ENCODE measurements at regions of chr1 and their contacts with region 1.

Region 1: DNA sequence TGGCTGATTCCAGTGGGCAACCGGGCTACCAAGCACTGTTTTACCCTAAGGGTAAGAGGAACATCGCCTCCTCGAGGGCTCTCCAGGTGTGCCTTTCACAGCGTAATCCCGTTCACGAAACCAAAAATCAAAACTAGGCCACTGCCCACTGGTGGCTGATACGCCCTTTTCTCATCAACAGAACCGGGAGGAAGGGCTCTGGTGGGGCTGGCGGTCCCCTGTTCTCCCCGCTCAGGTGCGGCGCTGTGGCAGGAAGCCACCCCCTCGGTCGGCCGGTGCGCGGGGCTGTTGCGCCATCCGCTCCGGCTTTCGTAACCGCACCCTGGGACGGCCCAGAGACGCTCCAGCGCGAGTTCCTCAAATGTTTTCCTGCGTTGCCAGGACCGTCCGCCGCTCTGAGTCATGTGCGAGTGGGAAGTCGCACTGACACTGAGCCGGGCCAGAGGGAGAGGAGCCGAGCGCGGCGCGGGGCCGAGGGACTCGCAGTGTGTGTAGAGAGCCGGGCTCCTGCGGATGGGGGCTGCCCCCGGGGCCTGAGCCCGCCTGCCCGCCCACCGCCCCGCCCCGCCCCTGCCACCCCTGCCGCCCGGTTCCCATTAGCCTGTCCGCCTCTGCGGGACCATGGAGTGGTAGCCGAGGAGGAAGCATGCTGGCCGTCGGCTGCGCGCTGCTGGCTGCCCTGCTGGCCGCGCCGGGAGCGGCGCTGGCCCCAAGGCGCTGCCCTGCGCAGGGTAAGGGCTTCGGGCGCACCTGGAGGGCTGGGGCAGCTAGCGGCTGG is at the start of gene IL6R:
- DNase-seq: peak; percentile 96
- ATAC-seq: peak; percentile 89
- total RNA-seq, gene IL6R: 10.3 TPM

Region 2: DNA sequence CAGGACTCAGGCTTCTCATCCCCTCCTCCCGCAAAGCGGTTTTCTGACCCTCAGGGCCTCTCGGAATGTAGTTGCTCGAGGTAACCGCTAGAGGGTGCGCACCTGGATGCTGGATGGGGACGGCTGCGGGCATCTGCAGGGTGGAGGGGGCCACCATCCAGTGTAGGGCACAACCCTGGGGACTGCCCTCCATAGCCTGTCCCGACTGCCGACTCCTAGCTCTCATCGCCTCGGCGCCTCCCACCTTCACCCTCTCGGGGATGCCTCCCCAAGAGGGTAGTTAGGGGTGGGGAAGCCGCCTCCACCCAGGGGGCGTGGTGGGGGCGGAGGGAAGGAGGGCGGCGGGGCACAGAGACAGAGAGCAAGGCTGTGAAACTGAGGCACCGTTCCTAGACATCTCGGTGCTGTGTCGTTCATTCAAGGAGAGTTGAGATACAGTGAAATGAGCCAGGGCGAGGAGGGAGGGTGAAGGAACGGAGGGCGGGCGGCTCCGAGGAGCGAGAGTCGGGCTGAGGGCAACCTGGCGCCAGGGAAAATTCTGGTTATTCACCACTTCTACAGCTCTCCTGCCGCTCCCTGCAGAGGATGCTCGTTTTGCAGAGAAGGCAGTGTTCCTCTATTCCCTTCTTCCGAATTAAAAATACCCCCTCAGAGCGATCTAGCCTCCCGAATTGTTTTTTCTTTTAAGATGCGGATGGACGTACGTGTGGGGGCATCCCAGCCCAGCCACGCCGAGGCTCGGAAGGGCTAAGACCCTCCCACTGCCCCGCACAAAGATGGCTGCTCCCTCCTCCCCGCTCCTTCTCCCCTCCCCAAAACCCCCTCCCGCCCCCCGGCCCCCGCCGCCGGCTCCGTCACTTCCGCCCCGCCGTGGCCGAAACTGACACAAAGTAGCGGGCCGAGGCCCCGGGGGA is 80.2 kb before region 1 on chr1 and contains the start of gene ATP8B2:
- intact Hi-C with region 1: loop called (anchors 5 kb)
- DNase-seq: peak; percentile 76
- ATAC-seq: peak; percentile 68
- total RNA-seq, gene ATP8B2: 11.0 TPM

Region 3: GRCh38 chr1:154434346-154435085 is 29.3 kb after region 1 on chr1:
- intact Hi-C with region 1: loop called (anchors 5 kb)
- DNase-seq: peak; percentile 88
- ATAC-seq: peak; percentile 90

Region 4: DNA sequence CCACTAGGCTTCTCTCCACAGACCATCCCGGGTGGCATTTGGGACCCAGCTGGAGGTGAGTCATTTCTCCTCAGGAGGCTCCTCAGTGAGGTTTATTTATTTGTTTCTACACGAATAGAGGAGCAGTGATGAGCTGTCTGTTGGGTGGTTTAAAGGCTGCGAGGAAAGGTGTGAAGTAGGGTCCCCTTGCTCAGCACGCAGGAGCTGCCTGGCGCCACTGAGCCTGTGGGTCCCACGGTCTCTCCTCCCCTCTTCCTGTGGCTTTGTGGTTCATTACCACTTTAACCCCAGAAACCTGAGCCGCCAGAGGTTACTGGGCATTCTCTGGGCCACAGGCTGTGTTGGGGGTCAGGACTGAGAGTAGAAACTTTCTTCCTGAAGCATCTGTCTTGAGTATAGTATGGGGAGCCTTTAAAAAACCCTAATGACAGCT is 39.9 kb after region 1 on chr1:
- intact Hi-C with region 1: no loop called
- DNase-seq: no peak
- ATAC-seq: no peak

Region 5: DNA sequence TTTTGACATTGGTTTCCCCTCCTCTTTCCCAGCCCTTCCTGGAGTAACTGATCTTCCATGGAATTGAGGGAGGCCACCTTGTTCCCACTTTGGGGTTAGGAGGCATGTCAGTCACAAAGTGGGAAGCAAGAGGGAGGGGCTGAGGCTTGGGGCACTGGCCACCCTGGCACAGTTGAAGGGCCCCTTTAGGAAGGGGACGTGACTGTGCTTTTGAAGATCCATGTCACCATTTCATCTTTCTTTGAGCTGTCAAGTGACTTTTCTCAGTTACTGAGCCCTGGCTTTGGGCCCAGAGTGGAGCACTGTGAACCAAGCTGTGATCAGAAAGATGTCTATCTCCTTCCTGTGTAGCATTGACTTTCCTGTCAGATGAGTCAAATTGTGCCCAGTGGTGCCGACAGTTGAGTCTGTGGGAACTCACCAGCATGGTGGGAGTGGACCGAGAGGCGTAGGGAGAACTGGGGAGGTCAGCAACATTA is 58.4 kb after region 1 on chr1:
- intact Hi-C with region 1: loop called (anchors 10 kb)
- DNase-seq: no peak
- ATAC-seq: peak; percentile 31